Right ventricle myocardium superior (tissue), 1 donor: ENCODE measurements at regions of chr5 and their contacts with region 1.

Region 1: DNA sequence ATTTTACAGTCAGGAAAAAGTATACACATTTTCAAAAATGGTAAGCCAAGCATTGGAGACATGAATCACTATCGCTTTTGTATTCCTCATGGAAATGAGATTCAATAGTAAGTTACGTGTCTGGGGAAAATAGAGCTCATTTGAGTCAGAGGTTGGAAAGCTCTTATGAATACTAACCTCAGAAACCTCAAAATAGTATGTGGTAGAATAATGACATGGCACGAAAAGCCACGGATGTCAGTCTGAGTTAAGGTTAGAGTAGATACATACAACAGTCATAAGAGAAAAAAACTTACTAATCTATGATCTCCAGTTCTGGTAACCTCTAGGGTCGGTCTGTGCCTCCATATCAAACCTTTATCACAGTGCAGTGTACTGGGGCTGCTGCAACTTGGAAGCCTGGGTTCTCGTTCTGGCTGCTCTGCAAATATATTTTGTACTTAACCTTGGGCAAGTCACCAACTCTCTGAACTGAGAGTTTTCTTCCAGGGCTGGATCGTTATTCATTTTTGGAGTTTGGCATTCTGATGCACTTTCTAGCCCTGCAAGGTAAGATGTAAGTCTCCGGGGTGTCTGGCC is 31.8 kb downstream of the MAP1B start:
- DNase-seq: no peak
- ATAC-seq: peak; percentile 62

Region 2: GRCh38 chr5:72252574-72253155 is 113.6 kb after region 1 on chr5:
- intact Hi-C with region 1: loop called (anchors 10 kb)
- DNase-seq: no peak
- ATAC-seq: no peak

Region 3: DNA sequence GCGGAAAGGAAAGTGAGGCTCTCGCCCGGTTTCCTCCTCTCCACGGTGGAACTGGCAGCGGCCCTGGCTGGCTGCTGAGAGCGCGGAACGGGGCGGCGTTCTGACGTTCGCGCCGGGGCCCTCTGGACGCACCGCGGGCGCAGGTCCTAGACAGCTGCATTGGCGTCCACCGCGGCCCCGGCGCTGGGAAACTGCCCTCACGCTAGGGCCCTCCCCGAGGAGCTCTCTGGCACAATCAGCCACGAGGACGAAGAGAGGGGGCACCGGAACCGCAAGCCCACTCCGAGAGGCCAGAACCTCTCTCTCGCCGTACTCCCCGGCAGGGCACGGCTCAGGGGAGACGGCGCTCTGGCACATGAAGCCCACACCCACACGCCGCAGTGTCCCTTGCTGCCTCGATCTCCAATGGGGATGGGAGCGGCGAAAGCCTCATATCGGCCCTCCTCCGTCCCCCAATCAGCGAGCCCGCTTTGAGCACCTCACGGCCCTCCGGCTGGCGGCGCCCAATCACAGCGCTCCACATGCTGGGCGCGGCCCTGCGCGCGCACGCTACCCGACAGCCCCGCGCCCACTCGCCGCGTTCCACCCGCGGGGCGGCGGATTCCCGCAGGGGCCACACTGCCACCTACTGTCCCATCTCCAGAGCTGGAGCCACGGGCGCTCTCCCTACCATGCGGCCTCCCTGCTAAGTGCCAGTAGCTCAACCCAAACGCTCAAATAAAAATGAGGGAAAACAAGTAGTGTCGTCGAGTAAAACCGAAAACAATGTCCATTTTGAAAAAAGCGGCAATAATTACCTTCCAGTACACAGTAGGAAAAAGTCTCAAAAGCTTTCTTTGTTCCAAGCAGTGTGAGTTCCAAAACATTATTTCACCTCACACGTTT is 169.2 kb after region 1 on chr5:
- intact Hi-C with region 1: loop called (anchors 5 kb)
- DNase-seq: peak; percentile 98
- ATAC-seq: peak; percentile 99